Right ventricle myocardium inferior (tissue), 1 donor: ENCODE measurements at regions of chr9 and their contacts with region 1.

Region 1: GRCh38 chr9:110007477-110008270 is 200.3 kb downstream of the C9orf152 start:
- DNase-seq: no peak
- ATAC-seq: no peak

Region 2: DNA sequence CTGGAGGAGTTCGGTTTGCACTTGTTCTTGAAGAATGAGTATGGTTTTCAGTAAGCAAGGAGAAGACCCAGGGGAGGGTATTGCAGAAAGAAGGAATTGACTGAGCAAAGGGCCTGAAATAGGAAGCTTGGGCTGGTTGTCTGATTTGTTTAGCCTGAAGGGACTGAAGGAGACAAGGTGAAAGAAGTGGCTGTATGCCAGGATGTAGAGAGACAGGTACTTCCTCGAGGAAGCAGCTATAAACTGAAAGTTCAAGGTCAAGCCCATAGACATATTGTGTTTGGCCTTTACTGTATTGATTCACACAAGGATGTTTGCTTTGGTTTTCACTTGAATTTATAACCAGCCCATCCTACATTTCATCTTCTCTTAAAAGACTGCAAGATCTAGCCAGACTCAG is 44.6 kb before region 1 on chr9:
- intact Hi-C with region 1: loop called (anchors 5 kb)
- DNase-seq: no peak
- ATAC-seq: no peak

Region 3: DNA sequence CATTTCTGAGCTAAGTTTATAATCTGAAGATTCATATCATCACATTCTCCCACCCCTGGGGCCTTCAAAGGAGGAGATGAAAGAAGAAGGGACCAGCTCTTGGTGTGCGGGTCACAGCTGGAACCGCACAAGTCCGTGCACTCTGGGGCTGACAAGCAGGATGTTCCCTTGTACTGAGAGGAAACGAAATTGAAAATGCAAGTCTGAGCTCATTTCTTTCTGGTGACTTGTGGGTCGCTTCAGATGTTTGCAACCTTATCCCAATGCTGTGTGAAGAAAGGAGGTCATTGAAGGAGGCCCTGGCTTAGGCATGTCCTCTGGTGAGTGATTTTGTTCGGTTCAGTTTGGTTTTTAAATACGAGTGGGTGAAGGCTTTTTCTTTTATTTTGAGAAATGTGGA is 140.7 kb after region 1 on chr9:
- intact Hi-C with region 1: no loop called
- DNase-seq: no peak
- ATAC-seq: peak; percentile 32